HCT116 (cell line): ENCODE measurements at regions of chr22 and their contacts with region 1.

Region 1: DNA sequence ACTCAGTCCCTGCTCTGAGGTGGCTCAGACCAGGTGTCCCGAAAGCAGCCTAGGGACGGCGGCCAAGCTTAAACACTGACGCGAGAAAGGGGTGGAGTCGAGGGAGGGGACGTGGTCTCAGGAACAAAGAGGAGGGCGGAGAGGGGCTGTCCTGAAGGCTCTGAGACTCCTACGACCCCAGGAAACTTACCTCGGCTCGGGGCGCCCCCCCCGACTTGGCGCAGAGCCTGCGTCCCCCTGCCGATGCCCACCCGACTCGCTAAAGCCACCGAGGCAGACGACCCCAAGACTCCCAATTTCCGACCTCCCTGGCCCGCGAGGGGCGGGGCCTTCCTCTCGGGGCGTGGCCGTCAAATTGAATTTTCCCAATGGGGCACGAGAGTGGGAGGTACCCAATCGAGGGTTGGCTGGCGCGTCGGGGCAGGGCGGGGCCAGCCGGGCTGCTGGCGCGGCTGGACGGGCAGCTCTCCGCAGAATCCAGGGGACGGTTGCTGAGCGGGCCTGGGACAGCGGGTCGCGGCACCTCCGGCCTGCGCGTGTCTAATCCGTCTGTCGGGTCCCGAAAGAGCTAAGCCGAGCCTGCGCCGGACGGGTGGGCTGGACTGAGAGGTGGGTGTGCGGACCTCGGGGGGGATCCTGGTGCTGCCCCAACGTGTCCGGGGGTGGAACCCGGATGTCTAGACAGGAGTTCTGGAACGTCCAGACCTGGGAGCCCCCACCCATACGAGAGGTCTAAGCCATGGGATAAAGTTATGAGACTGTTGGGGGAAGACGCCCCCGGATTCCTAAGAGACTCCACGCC is at the start of gene SMTN:
- DNase-seq: peak; percentile 83
- ATAC-seq: peak; percentile 71
- H3K4me3 ChIP-seq: peak within 1 kb of the TSS; percentile 78 to 93
- H3K27ac ChIP-seq: peak within 1 kb of the TSS; percentile 94
- H3K4me1 ChIP-seq: peaks cover 30 to 64% of the 10 kb centered on the region in 2 experiments
- H3K27me3 ChIP-seq: no peaks in the 10 kb centered on the region
- CTCF ChIP-seq: no peak
- POLR2A ChIP-seq: peak; percentile 81
- RAD21 ChIP-seq: no peak
- total RNA-seq, gene SMTN: 148 TPM

Region 2: DNA sequence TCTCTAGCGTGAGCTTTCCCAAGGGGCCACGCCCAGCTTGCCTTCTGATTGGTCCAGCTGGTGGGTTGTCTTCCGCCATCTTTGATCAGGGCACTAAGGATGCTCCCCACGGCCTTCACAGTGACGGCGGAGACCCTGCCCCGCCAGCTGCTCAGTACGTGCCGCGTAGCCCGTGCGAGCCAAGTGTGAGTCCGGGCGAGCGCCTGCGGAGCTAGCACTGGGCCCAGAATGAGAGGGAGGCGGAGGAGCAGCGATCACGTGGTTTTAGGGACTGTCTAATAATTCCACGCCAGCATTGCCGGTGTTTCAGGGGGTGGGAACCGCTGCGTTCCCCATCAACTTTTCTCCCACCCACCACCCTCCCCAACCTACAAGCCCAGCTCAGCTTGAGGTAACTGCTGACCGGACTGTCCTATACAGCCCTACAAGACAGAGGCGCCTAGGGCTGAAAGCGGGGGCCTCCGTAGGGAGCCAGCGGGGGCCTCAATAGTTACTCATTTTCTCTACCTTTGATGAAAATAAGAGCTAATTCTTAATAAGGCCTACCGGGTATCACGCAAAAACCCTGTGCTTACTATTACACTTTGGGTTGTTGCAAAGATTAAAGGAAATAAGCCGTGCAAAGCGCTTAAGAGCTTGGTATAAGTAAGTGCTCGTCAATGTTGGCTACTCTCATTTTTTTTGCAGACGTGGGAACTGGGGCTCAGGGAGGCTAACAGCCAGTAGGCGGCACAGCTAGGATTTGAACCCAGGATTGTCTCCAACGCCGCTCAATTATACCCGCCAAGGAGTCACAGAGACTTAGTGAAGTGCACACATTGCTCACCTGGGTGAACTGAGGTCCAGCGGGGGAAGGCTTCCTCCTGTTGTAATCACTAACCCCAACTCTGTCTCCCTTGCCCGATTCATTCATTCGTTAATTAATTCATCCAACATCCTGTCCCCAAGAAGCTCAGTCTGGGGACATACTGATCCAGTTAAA is 656.8 kb before region 1 on chr22:
- CTCF ChIA-PET with region 1: no interaction called
- POLR2A ChIA-PET with region 1: no interaction called
- RAD21 ChIA-PET with region 1: no interaction called
- intact Hi-C with region 1: loop called (anchors 10 kb)
- DNase-seq: peak; percentile 99
- ATAC-seq: peak; percentile 75
- H3K4me3 ChIP-seq: peak overlapping the region; percentile 82
- H3K27ac ChIP-seq: peak overlapping the region; percentile 98
- H3K4me1 ChIP-seq: peaks cover 42 to 74% of the 10 kb centered on the region in 2 experiments
- H3K27me3 ChIP-seq: no peaks in the 10 kb centered on the region
- CTCF ChIP-seq: peak in 2 of 3 experiments; percentile 25 to 27; a peak in 2 of 6 replicates
- POLR2A ChIP-seq: no peak
- RAD21 ChIP-seq: no peak

Region 3: GRCh38 chr22:30947816-30948454 is 133.1 kb before region 1 on chr22:
- CTCF ChIA-PET with region 1: interaction called, 25 read pairs
- POLR2A ChIA-PET with region 1: interaction called, 5 read pairs
- RAD21 ChIA-PET with region 1: interaction called, 3 to 4 read pairs
- intact Hi-C with region 1: loop called (anchors 1 kb)
- DNase-seq: peak; percentile 16
- ATAC-seq: peak; percentile 50; the same call in 1 of the 2 replicates
- H3K4me3 ChIP-seq: no peak overlapping the region
- H3K27ac ChIP-seq: no peak overlapping the region
- H3K4me1 ChIP-seq: no peaks in the 10 kb centered on the region
- H3K27me3 ChIP-seq: no peaks in the 10 kb centered on the region
- CTCF ChIP-seq: peak; percentile 52 to 66 (median 66); a peak in 5 of 6 replicates
- POLR2A ChIP-seq: no peak
- RAD21 ChIP-seq: peak; percentile 73

Region 4: DNA sequence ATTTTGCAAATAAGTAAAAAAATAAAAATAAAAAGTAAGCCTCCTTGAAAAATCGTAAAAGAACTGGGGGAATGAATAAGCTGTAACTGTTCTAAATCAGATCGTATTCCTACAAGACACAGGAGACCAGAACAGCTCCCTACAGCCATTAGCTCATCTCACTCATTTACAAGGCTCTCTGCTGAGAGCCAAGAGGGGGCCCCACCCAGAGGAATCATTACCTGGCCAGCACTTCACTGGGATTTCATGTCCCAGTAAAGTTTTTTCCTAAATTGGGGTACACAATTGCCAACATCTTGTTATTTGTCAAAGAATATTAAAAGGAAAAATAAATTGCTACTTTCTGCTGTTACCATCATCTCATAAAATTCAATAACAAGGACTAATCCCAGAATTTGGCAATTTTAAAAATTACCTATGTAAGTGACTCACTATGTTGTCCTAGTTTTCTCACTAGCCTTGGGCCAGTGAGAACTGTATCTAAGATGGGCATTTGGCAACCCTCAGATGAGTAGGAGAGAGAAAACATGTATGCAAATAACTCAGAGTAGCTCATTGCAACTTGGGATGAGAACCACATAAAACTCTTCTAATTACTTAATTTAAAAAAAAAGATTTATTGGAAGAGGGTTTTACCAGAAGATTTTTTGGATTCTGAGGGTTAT is 18.4 kb before region 1 on chr22:
- CTCF ChIA-PET with region 1: interaction called, 18 read pairs
- POLR2A ChIA-PET with region 1: interaction called, 86 read pairs
- RAD21 ChIA-PET with region 1: no interaction called
- intact Hi-C with region 1: no loop called
- DNase-seq: no peak
- ATAC-seq: no peak
- H3K4me3 ChIP-seq: no peak overlapping the region
- H3K27ac ChIP-seq: peak overlapping the region; percentile 72; the same call in 1 of the 2 replicates
- H3K4me1 ChIP-seq: peaks cover 9 to 31% of the 10 kb centered on the region in 2 experiments; a peak in 3 of 4 replicates
- H3K27me3 ChIP-seq: no peaks in the 10 kb centered on the region
- CTCF ChIP-seq: no peak
- POLR2A ChIP-seq: no peak
- RAD21 ChIP-seq: no peak

Region 5: GRCh38 chr22:31230871-31231621 is 150.0 kb after region 1 on chr22:
- CTCF ChIA-PET with region 1: no interaction called
- POLR2A ChIA-PET with region 1: no interaction called
- RAD21 ChIA-PET with region 1: no interaction called
- intact Hi-C with region 1: loop called (anchors 5 kb)
- DNase-seq: no peak
- ATAC-seq: peak; percentile 67
- H3K4me3 ChIP-seq: no peak overlapping the region
- H3K27ac ChIP-seq: no peak overlapping the region
- H3K4me1 ChIP-seq: peaks cover 0 to 5% of the 10 kb centered on the region in 2 experiments; a peak in 1 of 4 replicates
- H3K27me3 ChIP-seq: no peaks in the 10 kb centered on the region
- CTCF ChIP-seq: peak; percentile 34 to 45 (median 43); a peak in 4 of 6 replicates
- POLR2A ChIP-seq: no peak
- RAD21 ChIP-seq: peak; percentile 67